Heart right ventricle (tissue), 16 donors: ENCODE measurements at regions of chr12 and their contacts with region 1.

Region 1: DNA sequence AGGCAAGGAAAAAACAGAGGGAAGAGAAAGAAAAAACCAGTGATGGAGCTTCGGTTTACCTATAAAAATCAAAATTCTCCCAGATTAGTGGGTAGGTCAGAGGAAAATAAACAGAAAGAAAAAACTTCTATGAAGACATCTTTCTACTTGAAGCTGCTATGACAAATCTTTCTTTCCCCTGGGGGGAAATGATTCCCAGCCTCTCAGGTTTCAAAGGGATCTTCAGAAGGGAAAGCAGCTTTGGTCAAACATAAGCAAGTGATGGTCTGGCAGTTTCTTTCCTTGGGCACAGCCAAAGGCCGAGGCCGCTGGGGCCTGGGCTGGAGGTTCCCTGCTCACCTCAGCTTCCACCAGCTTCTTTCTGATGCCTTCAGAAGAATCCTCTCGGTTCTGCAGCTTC is 104.5 kb downstream of the PRKAB1 start:
- DNase-seq: no peak
- ATAC-seq: no peak
- H3K4me3 ChIP-seq: no peak overlapping the region
- H3K27ac ChIP-seq: no peak overlapping the region
- H3K4me1 ChIP-seq: no peaks in the 10 kb centered on the region
- H3K27me3 ChIP-seq: no peaks in the 10 kb centered on the region
- CTCF ChIP-seq: no peak

Region 2: DNA sequence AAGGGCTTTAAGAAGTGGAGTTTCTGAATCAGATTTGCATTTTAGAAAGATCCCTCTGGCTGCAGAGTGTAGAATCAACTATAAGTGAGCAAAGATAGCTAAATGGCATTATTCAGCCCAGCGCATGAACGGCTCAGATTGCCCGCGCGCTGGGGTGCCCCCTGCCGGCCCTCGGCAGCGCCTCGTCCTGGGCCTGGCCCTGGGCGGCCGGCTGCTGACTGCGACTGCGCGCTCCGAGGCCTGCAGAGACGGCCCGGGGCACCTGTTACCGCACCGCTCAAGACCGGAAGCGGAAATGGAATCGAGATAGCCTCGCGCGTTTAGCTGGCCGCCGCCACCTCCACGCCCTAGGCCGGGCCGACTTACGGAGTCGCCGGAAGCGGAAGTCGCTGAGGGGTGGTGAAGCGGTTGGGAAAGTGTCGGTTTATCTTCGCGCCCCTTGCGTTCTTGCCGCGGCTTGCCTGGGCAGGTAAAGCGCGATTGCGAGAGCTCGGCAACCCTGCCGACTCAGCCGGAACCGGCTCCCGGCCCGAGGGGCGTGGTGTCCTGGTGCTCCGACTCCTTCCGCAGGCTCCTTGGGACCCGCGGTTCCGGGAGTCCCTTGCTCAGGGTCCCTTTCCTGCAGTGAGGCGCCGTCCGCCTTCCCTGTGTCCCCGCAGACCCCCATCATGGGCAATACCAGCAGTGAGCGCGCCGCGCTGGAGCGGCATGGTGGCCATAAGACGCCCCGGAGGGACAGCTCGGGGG is 104.7 kb before region 1 on chr12 and contains the start of gene PRKAB1:
- intact Hi-C with region 1: loop called in 1 of 10 experiments (anchors 10 kb)
- DNase-seq: peak; percentile 94 to 95
- ATAC-seq: peak; percentile 99 to 100 (median 99)
- H3K4me3 ChIP-seq: peak within 1 kb of the TSS; percentile 64 to 99 (median 90)
- H3K27ac ChIP-seq: peak within 1 kb of the TSS; percentile 83 to 97 (median 94)
- H3K4me1 ChIP-seq: peaks cover 7 to 65% (median 48%) of the 10 kb centered on the region in 9 donors
- H3K27me3 ChIP-seq: no peaks in the 10 kb centered on the region
- CTCF ChIP-seq: peak; percentile 88 to 100 (median 91)
- total RNA-seq, gene PRKAB1: 8.6 to 14.5 (median 10.4) TPM

Region 3: DNA sequence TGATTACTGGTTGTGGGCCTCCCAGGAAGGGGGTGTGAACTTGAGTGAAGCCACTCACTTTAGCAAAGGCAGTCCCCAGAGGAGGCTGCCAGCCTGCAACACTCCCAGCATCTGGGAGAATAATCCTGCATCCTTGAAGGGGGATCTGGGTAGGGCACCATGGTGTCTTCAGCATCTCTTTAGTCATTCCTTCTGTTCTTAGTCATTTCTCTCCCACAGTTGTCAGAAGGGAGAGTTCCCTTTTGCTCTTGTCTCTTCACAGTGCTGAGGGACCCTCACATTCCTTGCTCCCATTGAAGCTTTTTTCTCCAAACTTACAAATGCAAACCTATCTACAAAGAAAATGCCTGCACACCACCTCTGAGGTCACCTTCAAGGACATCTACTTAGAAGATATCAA is 152.8 kb after region 1 on chr12:
- intact Hi-C with region 1: no loop called
- DNase-seq: no peak
- ATAC-seq: no peak
- H3K4me3 ChIP-seq: no peak overlapping the region
- H3K27ac ChIP-seq: no peak overlapping the region
- H3K4me1 ChIP-seq: no peaks in the 10 kb centered on the region
- H3K27me3 ChIP-seq: peaks cover 0 to 51% (median 14%) of the 10 kb centered on the region in 7 donors
- CTCF ChIP-seq: no peak